ENCODE measurements at regions of chr2 and their contacts with region 1.

Region 1: DNA sequence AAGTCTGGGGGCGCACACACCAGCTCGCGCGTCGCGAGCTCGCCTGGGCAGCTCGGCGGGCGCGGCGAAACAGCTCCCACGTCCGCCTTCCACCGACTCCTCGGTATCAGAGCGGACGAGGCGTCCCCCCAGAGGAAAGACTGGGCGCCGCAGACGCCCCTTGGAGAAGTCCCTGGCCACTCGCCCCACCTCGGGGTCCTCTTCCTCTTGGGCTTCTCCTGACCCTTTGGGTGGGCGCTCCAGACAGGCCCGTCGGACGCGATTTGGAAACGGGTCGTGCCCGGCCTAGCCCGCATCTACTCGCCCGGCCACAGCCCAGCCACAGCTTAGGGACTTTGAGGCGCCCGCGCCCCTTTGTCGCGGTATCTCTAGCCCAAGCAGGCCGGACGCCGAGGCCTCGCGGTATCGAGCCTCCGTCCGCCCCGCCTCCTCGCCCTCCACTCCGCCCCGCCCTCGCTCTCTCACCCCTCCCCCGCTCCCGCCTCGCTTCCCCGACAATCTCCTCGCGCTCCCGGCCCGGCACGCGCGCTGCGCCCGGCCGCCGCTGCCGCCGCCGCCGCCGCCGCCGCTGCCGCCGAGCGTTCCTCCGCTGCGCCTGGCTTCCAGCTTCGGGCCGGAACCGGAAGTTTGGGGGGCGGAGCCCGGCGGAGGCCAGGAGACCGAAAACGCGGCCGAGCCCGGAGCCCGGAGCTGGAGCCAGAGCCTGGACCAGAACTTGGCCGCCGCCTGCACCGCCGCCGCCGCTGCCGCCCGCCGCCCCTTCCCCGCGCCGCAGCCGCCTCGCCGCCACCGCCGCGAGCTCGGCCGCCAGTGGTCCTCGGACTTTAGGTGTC is 749 bp upstream of the ACVR2A start:
- DNase-seq: peak; percentile 83 to 85
- ATAC-seq: peak; percentile 90 to 92
- H3K4me3 ChIP-seq: peak overlapping the region; percentile 77 to 91 (median 86)
- H3K27ac ChIP-seq: peak overlapping the region; percentile 89 to 99 (median 96)
- H3K4me1 ChIP-seq: peaks cover 37 to 43% of the 10 kb centered on the region in 2 donors
- H3K27me3 ChIP-seq: no peaks in the 10 kb centered on the region
- CTCF ChIP-seq: peak in 3 of 5 experiments; percentile 10 to 31 (median 27)
- POLR2A ChIP-seq: peak; percentile 68 to 73

Region 2: DNA sequence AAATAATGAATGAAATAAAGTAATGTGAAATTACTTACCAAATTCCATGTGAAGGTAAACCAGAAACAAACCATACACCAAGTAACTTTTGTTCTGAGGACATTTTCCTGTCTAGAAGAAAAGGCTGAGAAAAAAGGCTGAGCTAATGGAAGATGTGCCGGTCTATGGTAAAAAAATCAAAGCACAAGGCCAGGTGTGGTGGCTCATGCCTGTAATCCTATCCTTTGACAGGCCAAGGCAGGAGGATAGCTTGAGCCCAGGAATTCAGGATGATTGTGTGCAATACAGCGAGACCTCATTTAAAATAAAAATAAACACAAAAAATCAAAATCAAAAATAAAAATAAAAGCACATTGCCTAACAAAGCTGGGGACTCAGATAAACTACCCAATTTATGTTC is 169.8 kb after region 1 on chr2:
- in situ Hi-C with region 1: loop called in 1 of 4 experiments (anchors 10 kb)
- intact Hi-C with region 1: no loop called
- DNase-seq: no peak
- ATAC-seq: no peak
- H3K4me3 ChIP-seq: no peak overlapping the region
- H3K27ac ChIP-seq: no peak overlapping the region
- H3K4me1 ChIP-seq: peaks cover 36 to 39% of the 10 kb centered on the region in 2 donors
- H3K27me3 ChIP-seq: no peaks in the 10 kb centered on the region
- CTCF ChIP-seq: no peak
- POLR2A ChIP-seq: no peak

Region 3: DNA sequence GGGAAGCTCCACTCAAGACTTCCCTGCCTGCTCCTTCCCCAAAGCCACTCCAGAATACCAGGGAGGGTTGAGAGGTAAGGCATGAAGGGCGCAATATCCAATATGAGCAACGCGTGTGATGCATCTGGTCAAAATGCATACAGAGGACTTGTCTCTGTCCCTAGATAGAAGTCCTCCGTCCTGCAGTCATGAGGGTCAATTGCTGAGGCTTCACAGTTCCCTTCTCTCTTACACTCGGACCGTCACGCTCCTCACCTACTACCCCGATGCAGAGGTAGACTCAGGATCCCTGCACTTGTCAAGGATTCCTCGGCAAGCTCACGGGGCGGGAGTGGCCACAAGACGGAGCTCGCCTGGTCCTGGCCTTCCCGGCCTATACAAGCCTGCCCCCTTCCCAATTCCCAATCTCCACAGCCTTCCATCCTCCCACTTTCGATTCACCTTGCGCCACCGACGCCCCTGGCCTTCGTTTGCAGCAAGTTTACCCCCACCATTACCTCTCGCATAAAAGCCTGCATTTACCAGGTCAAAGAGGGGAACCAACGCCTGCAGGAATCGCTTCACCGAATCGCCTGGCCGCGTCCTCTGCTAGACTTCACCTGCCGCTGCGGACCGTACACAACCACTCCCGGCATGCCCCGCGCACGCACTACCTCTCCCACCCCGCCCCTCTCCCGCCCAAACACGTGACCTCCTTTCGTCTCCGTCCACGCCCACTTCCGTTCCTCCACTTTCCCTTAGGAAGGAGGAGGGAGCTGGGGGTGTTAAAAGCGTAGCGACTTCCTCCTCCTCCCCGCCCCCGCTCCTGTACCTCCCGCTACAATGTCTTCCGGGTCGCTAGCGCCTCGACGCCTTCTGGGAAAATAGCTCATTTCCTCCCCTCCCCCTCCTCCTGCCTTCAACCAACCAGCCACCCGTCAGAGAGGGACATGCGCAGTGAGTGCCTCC is 176.3 kb after region 1 on chr2 and contains the start of gene ORC4:
- in situ Hi-C with region 1: loop called in 1 of 4 experiments (anchors 10 kb)
- intact Hi-C with region 1: loop called (anchors 2 kb)
- DNase-seq: peak; percentile 99
- ATAC-seq: peak; percentile 96 to 98
- H3K4me3 ChIP-seq: peak within 1 kb of the TSS; percentile 84 to 98 (median 90)
- H3K27ac ChIP-seq: peak within 1 kb of the TSS; percentile 95 to 99 (median 98)
- H3K4me1 ChIP-seq: peaks cover 40 to 49% of the 10 kb centered on the region in 2 donors
- H3K27me3 ChIP-seq: no peaks in the 10 kb centered on the region
- CTCF ChIP-seq: peak in 4 of 5 experiments; percentile 12 to 53 (median 34)
- POLR2A ChIP-seq: peak; percentile 55 to 62
- total RNA-seq, gene ORC4: 34.8 to 51.8 (median 43.1) TPM

Region 4: DNA sequence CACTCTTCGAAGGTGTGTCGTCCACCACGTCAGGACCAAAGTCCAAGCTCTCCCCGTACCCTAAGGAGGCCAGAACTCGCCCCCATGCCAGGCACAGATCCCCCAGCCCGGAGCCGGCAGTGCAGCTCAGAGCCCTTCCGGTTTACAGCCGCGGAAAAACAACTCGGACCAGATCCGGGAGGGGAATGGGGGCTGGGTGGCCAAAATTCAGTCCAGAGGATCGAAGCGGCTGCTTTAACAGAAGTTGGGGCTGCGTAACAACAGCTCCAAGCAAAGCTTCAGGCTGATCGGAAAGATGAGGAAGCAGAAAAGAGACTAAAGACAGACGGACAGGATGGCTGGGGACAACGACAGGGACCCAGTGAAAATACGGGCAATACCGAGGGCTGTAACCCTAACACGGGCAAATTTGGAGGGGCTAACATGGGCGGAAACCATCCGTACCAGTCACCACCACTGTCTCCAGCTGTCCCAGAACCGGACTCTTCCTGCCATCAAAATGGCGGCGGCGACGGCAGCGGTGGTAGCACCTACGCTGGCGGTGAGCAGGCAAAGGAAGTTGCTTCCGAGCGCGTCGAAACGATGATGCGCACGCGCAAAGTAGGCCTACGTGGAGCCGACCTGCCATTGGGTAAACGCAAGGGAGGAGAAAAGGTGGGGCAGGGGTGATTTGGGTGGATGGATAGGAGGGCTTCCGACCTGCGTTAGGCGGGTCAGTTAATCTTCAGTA is 1743.3 kb after region 1 on chr2 and contains the start of gene MMADHC:
- in situ Hi-C with region 1: no loop called
- intact Hi-C with region 1: loop called (anchors 5 kb)
- DNase-seq: peak; percentile 93 to 96
- ATAC-seq: peak; percentile 96 to 98
- H3K4me3 ChIP-seq: peak within 1 kb of the TSS; percentile 75 to 93 (median 92)
- H3K27ac ChIP-seq: peak within 1 kb of the TSS; percentile 92 to 98 (median 97)
- H3K4me1 ChIP-seq: peaks cover 25 to 47% of the 10 kb centered on the region in 2 donors
- H3K27me3 ChIP-seq: no peaks in the 10 kb centered on the region
- CTCF ChIP-seq: no peak
- POLR2A ChIP-seq: peak; percentile 80 to 87
- total RNA-seq, gene MMADHC: 140 to 205 (median 169) TPM